ENCODE measurements at regions of chr1 and their contacts with region 1.

Region 1: DNA sequence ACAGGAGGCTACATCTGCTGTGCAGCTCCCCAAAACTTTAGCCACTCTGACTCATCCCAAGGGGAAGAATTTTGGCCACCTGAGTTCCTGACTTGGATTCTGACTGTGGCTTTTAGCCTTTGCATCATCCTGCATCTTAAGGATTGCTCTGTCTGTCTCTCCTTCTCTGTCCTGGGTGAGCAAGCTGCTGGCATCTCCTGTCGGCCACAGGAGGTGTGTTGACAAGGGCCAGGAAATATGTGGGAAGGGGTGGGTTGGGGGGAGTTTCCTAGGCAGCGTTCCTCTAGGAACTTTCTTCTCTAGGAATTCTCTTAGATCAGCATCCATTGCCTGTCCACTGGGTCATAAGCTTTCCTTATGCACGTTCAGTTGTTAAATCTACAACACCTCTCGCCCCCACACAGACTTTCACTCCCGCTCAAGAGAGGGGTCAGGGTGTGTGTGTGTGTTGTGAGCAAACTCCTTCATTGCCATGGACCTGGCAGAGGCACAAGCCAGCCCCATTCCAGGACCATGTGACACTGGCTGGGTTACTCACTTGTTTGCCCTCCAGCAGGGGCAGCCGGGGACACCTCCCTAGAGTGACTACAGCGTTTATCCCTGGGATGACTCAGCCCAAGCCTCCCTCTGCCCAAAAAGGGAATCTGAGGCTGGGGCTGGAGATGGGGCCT is 145.0 kb upstream of the DUSP10 start:
- DNase-seq: peak in 1 of 5 donors; percentile 15
- H3K4me3 ChIP-seq: no peak overlapping the region
- H3K27ac ChIP-seq: no peak overlapping the region
- H3K4me1 ChIP-seq: peaks cover 1% of the 10 kb centered on the region
- H3K27me3 ChIP-seq: no peaks in the 10 kb centered on the region
- CTCF ChIP-seq: no peak
- EP300 ChIP-seq: no peak
- POLR2A ChIP-seq: no peak

Region 2: GRCh38 chr1:221839796-221840395 is 47.0 kb before region 1 on chr1:
- intact Hi-C with region 1: no loop called
- DNase-seq: peak in 1 of 5 donors; percentile 16
- H3K4me3 ChIP-seq: no peak overlapping the region
- H3K27ac ChIP-seq: no peak overlapping the region
- H3K4me1 ChIP-seq: no peaks in the 10 kb centered on the region
- H3K27me3 ChIP-seq: no peaks in the 10 kb centered on the region
- CTCF ChIP-seq: no peak
- EP300 ChIP-seq: no peak
- POLR2A ChIP-seq: no peak

Region 3: GRCh38 chr1:221905802-221906201 is 18.9 kb after region 1 on chr1:
- intact Hi-C with region 1: loop called in 1 of 4 experiments (anchors 1 kb)
- DNase-seq: no peak
- H3K4me3 ChIP-seq: no peak overlapping the region
- H3K27ac ChIP-seq: no peak overlapping the region
- H3K4me1 ChIP-seq: no peaks in the 10 kb centered on the region
- H3K27me3 ChIP-seq: no peaks in the 10 kb centered on the region
- CTCF ChIP-seq: no peak
- EP300 ChIP-seq: no peak
- POLR2A ChIP-seq: no peak

Measured in ovary (tissue), 10 donors.